ENCODE measurements at regions of chr11 and their contacts with region 1.

Region 1: GRCh38 chr11:117178210-117179034 is at the start of gene SIDT2:
- DNase-seq: peak; percentile 92
- CTCF ChIP-seq: no peak

Region 2: GRCh38 chr11:117160826-117161225 is 17.6 kb before region 1 on chr11:
- CTCF ChIA-PET with region 1: interaction called, 21 read pairs
- POLR2A ChIA-PET with region 1: interaction called, 4 read pairs
- DNase-seq: no peak
- CTCF ChIP-seq: no peak

Region 3: DNA sequence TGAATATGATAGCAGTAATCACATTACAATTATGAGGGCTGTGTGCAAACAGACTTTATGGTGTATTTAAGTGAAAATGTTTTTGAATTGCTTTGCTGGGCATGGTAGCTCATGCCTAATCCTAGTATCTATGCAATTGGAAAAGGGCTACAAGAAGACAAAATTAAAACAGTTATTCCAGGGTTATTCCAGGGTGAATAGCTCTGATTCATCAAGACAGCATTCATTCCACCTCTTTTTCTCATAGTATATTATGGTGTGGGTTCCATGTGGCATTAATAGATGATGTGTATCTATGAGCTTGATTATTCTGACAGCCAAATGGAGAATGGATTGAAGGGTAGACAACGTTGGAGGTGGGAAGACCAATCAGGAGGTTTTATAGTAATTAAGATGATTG is 11.9 kb before region 1 on chr11:
- CTCF ChIA-PET with region 1: interaction called, 42 read pairs
- POLR2A ChIA-PET with region 1: interaction called, 6 read pairs
- DNase-seq: no peak
- CTCF ChIP-seq: no peak

Region 4: DNA sequence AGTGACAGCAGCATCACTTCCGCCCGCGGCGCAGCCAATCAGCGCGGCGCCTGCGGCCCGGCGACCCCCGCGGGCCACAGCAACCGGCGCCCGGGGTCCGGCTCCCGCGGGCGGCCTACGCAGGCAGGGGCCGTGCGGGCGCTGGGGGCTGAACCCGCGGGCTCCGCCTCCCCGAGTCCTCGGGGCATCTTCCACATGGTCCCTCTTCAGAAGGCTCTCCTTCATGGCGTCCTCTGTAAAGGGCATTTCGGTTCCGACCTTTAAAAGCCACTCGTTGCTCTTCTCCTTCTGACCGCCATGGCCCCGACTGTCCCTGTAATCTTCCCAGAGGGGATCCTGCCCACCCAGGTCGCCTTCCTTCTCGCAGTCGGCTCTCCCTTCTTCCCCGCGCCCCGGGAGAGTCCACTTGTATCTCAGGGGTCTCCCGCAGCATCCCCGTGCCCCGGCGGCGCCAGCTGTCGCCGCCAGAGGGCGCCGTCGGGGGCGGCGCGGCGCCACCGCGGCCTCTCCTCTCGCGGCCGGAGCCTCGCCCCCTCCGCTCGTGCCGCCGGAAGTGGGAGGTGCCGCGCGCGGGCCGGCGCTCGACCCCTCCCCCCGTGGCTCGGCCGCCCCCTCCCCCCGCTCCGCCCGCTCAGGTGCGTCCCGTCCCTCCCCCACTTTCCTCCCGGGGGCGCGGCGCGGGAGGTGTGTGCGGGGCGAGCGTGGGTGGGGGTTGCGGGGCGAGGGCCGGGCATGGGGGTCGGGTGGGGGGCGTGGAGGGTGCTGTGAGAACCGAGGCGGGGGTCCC is 53.9 kb after region 1 on chr11 and contains the start of gene RNF214:
- CTCF ChIA-PET with region 1: interaction called, 118 read pairs
- POLR2A ChIA-PET with region 1: interaction called, 3 read pairs
- DNase-seq: peak; percentile 98
- CTCF ChIP-seq: peak; percentile 85